Activated CD4-positive, alpha-beta T cell treated with anti-CD3 and anti-CD28 coated beads for 36 hours (primary cell): ENCODE measurements at regions of chr16 and their contacts with region 1.

Region 1: DNA sequence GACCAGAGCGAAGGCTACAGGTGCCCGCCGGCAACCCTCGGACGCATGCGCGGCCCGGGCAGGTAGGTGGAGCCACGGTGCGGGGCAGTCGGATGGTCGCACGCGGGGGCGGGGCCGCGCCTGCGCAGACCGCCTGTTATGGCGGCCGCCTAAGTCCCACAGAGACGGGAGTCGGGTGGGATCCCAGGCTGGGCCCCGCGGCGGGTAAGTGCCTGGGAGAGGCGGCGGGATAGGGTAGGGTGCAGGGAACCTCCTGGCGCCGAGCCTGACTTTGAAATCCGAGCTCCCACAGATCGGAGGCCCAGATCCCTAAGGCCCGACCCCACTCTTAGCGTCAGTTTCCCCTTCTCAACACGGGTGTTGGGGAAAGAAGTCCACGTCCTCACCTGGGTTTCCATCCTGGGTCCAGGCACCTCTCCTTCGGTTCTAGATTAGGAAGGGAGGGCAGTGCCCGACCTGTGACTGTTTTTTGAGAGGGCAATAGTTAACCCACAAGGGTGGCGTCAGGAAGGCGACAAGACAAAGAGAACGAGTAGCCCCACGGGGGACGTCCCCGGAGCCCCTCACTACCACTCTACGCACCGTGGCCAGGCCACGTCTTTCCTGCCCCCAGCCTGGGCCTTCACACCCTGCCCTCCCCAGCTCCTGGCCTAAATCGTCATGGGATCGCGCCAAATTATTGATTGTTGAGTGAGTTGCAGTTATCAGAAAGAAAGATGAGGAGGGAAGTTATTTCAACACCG is at the start of gene METTL22:
- DNase-seq: peak; percentile 96
- ATAC-seq: peak; percentile 98
- H3K4me3 Mint-ChIP-seq: peak within 1 kb of the TSS; percentile 91
- H3K27ac Mint-ChIP-seq: peak within 1 kb of the TSS; percentile 87
- H3K4me1 Mint-ChIP-seq: peaks cover 28% of the 10 kb centered on the region
- H3K27me3 Mint-ChIP-seq: peaks cover 3% of the 10 kb centered on the region
- total RNA-seq, gene METTL22: 32.3 to 45.8 TPM

Region 2: GRCh38 chr16:7004266-7004665 is 1617.5 kb before region 1 on chr16:
- CTCF ChIA-PET with region 1: no interaction called
- POLR2A ChIA-PET with region 1: no interaction called
- intact Hi-C with region 1: no loop called
- DNase-seq: no peak
- ATAC-seq: no peak
- H3K4me3 Mint-ChIP-seq: no peak overlapping the region
- H3K27ac Mint-ChIP-seq: no peak overlapping the region
- H3K4me1 Mint-ChIP-seq: no peaks in the 10 kb centered on the region
- H3K27me3 Mint-ChIP-seq: no peaks in the 10 kb centered on the region

Region 3: DNA sequence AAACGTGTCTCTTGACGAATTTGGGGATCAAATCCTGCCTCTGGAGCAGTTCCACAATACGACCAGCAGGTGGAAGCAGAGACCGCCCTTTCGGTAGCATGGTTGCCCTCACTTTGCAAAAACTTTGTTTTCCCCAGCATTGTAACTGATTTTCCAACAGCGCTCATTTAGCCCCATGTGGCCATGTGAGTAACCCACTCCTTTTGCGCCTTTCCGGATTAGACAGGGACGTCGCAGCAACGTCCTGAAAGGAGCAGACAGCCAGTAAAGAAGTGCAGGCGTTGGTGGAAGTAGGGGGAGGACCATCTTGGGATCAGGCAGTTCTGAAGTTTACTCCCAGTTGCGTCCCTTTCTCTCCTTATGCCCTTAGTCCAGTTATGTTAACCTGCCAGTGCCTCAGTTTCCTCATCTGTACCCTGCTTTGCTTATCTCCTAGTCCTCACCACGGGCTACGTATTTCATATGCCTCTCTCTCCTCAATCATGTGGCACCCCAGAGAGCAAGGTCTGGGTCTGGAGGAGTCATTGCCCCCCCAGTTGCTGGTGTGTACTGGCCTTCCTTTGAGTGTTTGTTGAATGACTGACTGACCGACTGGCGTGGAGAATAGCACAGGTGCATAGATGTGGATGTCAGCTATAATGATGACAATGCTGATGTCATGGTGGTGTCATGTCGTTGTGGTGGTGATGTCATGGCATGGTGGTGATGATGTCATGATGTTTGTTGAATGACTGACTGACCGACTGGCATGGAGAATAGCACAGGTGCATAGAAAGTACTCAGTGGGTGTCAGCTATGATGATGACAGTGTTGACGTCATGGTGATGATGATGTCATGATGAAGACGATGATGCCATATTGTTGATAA is 53.8 kb before region 1 on chr16:
- CTCF ChIA-PET with region 1: no interaction called
- POLR2A ChIA-PET with region 1: no interaction called
- intact Hi-C with region 1: loop called in 1 of 2 experiments (anchors 1 kb)
- DNase-seq: peak; percentile 87
- ATAC-seq: peak; percentile 94
- H3K4me3 Mint-ChIP-seq: no peak overlapping the region
- H3K27ac Mint-ChIP-seq: no peak overlapping the region
- H3K4me1 Mint-ChIP-seq: peaks cover 4% of the 10 kb centered on the region
- H3K27me3 Mint-ChIP-seq: peaks cover 9% of the 10 kb centered on the region

Region 4: GRCh38 chr16:8674413-8675022 is 52.8 kb after region 1 on chr16 and contains the start of gene ABAT:
- CTCF ChIA-PET with region 1: no interaction called
- POLR2A ChIA-PET with region 1: no interaction called
- intact Hi-C with region 1: loop called in 1 of 2 experiments (anchors 1 kb)
- DNase-seq: peak; percentile 93
- ATAC-seq: peak; percentile 96
- H3K4me3 Mint-ChIP-seq: peak within 1 kb of the TSS; percentile 83
- H3K27ac Mint-ChIP-seq: peak within 1 kb of the TSS; percentile 92
- H3K4me1 Mint-ChIP-seq: peaks cover 18% of the 10 kb centered on the region
- H3K27me3 Mint-ChIP-seq: no peaks in the 10 kb centered on the region
- total RNA-seq, gene ABAT: 5.4 to 6.0 TPM